GM12878 (cell line): ENCODE measurements at regions of chr7 and their contacts with region 1.

Region 1: GRCh38 chr7:135414850-135415439 is 95.0 kb downstream of the CNOT4 start:
- DNase-seq: no peak
- ATAC-seq: peak; percentile 80
- H3K4me3 ChIP-seq: no peak overlapping the region
- H3K27ac ChIP-seq: no peak overlapping the region
- H3K4me1 ChIP-seq: no peaks in the 10 kb centered on the region
- H3K27me3 ChIP-seq: no peaks in the 10 kb centered on the region
- CTCF ChIP-seq: peak; percentile 55 to 59 (median 58); a peak in 5 of 6 replicates
- EP300 ChIP-seq: no peak
- POLR2A ChIP-seq: no peak
- RAD21 ChIP-seq: peak; percentile 58

Region 2: GRCh38 chr7:135501403-135501802 is 86.5 kb after region 1 on chr7:
- CTCF ChIA-PET with region 1: interaction called, 11 read pairs
- POLR2A ChIA-PET with region 1: interaction called, 4 read pairs
- RAD21 ChIA-PET with region 1: interaction called, 4 read pairs
- SMC1A ChIA-PET with region 1: interaction called, 10 read pairs
- in situ Hi-C with region 1: no loop called
- intact Hi-C with region 1: loop called (anchors 5 kb)
- DNase-seq: no peak
- ATAC-seq: peak; percentile 35
- H3K4me3 ChIP-seq: no peak overlapping the region
- H3K27ac ChIP-seq: no peak overlapping the region
- H3K4me1 ChIP-seq: no peaks in the 10 kb centered on the region
- H3K27me3 ChIP-seq: no peaks in the 10 kb centered on the region
- CTCF ChIP-seq: peak in 1 of 3 experiments; percentile 17; a peak in 1 of 6 replicates
- EP300 ChIP-seq: no peak
- POLR2A ChIP-seq: no peak
- RAD21 ChIP-seq: 0 out of 2 replicates have a peak, but pooled peaks have one; percentile 5

Region 3: DNA sequence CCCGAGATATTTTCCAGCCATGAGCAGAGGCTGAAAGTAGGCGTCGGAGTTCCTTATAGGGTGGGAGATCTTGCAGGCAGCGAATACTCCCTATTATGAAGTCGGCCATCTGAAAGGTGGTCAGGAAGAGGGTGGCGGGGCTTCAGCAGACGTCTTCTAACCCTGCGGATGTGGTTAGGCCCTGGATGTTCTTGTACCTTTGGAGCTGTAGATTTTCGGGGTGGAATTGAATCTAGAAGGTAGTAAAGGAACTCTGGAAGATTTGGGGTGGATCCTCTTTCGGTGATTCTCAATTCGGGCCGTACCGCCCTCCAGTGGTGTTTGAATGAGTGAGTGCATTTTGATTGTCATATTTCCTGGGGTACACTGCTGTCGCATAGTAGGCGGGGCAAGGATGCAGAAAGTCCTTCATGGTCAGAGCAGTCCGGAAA is 143.4 kb after region 1 on chr7:
- CTCF ChIA-PET with region 1: interaction called, 14 read pairs
- POLR2A ChIA-PET with region 1: no interaction called
- RAD21 ChIA-PET with region 1: no interaction called
- SMC1A ChIA-PET with region 1: no interaction called
- in situ Hi-C with region 1: no loop called
- intact Hi-C with region 1: no loop called
- DNase-seq: peak; percentile 62
- ATAC-seq: peak; percentile 86
- H3K4me3 ChIP-seq: peak overlapping the region; percentile 96
- H3K27ac ChIP-seq: peak overlapping the region; percentile 95
- H3K4me1 ChIP-seq: peaks cover 25% of the 10 kb centered on the region
- H3K27me3 ChIP-seq: no peaks in the 10 kb centered on the region
- CTCF ChIP-seq: peak; percentile 62 to 73 (median 71); a peak in 5 of 6 replicates
- EP300 ChIP-seq: no peak
- POLR2A ChIP-seq: no peak
- RAD21 ChIP-seq: peak; percentile 64

Region 4: GRCh38 chr7:135584362-135585353 is 169.7 kb after region 1 on chr7:
- CTCF ChIA-PET with region 1: no interaction called
- POLR2A ChIA-PET with region 1: no interaction called
- RAD21 ChIA-PET with region 1: no interaction called
- SMC1A ChIA-PET with region 1: no interaction called
- in situ Hi-C with region 1: no loop called
- intact Hi-C with region 1: loop called (anchors 10 kb)
- DNase-seq: no peak
- ATAC-seq: no peak
- H3K4me3 ChIP-seq: no peak overlapping the region
- H3K27ac ChIP-seq: no peak overlapping the region
- H3K4me1 ChIP-seq: no peaks in the 10 kb centered on the region
- H3K27me3 ChIP-seq: no peaks in the 10 kb centered on the region
- CTCF ChIP-seq: no peak
- EP300 ChIP-seq: no peak
- POLR2A ChIP-seq: no peak
- RAD21 ChIP-seq: no peak